CD14-positive monocyte (primary cell): ENCODE measurements at regions of chr12 and their contacts with region 1.

Region 1: DNA sequence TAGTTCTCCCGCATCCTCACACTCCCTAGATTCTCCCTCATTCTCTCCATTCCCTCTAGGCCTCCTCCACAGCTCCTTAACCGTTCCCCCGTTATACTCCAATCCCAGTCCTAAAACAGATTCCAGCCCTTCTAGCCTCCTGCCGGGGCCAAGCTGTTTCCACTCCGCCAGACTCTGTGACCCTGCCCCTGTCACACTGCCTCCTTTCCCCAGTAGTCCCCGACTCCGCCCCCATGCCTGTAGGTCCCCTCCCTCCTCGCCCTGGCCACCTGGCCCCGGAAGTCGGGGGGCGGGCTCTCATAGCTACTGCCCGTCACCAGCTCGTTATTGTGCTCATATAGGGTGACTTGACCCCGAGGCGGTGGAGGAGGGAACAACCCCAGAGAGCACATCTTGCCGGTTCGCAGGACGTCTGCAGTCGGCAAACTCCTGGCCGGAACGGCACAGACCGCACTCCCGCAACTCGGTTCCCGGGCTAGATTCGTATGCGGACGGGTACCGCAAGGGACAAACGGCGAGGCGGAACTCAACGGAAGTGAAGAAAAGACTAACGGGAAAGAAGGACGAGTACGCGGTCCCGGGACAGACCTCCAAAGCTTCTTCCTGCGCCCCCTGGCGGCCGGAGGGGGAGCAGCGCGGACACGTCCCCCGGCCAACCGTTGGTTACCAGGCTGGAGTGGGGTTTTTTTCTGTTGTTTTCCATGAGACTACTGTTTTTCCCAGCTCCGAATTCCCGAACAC is at the start of gene AAAS:
- DNase-seq: peak; percentile 89 to 91 (median 90)
- H3K4me3 ChIP-seq: peak within 1 kb of the TSS; percentile 52 to 96 (median 70)
- H3K4me3 Mint-ChIP-seq: peak within 1 kb of the TSS; percentile 95
- H3K27ac ChIP-seq: peak within 1 kb of the TSS; percentile 70 to 80
- H3K27ac Mint-ChIP-seq: peak within 1 kb of the TSS; percentile 90 to 99 (median 98)
- H3K4me1 ChIP-seq: peaks cover 36 to 43% of the 10 kb centered on the region in 2 donors
- H3K4me1 Mint-ChIP-seq: peaks cover 33% of the 10 kb centered on the region
- H3K27me3 ChIP-seq: peaks cover 5% of the 10 kb centered on the region in 2 donors
- H3K27me3 Mint-ChIP-seq: peaks cover 8 to 9% (median 8%) of the 10 kb centered on the region in 3 donors
- CTCF ChIP-seq: peak; percentile 99
- polyA plus RNA-seq, gene AAAS: 25.6 to 62.6 (median 27.2) TPM

Region 2: GRCh38 chr12:53143355-53143754 is 177.9 kb before region 1 on chr12:
- intact Hi-C with region 1: no loop called
- DNase-seq: no peak
- H3K4me3 ChIP-seq: no peak overlapping the region
- H3K4me3 Mint-ChIP-seq: no peak overlapping the region
- H3K27ac ChIP-seq: no peak overlapping the region
- H3K27ac Mint-ChIP-seq: no peak overlapping the region
- H3K4me1 ChIP-seq: no peaks in the 10 kb centered on the region
- H3K4me1 Mint-ChIP-seq: no peaks in the 10 kb centered on the region
- H3K27me3 ChIP-seq: no peaks in the 10 kb centered on the region
- H3K27me3 Mint-ChIP-seq: peaks cover 0 to 6% (median 3%) of the 10 kb centered on the region in 3 donors
- CTCF ChIP-seq: no peak

Region 3: GRCh38 chr12:53213348-53213747 is 107.9 kb before region 1 on chr12:
- intact Hi-C with region 1: loop called (anchors 2 to 10 kb)
- DNase-seq: peak; percentile 73 to 82 (median 74)
- H3K4me3 ChIP-seq: no peak overlapping the region
- H3K4me3 Mint-ChIP-seq: no peak overlapping the region
- H3K27ac ChIP-seq: no peak overlapping the region
- H3K27ac Mint-ChIP-seq: peak overlapping the region in 1 of 7 donors; percentile 12
- H3K4me1 ChIP-seq: peaks cover 45 to 74% of the 10 kb centered on the region in 2 donors
- H3K4me1 Mint-ChIP-seq: peaks cover 81% of the 10 kb centered on the region
- H3K27me3 ChIP-seq: no peaks in the 10 kb centered on the region
- H3K27me3 Mint-ChIP-seq: peaks cover 0 to 5% (median 2%) of the 10 kb centered on the region in 3 donors
- CTCF ChIP-seq: peak; percentile 97

Region 4: GRCh38 chr12:53295070-53295890 is 26.0 kb before region 1 on chr12 and contains the start of gene PFDN5:
- intact Hi-C with region 1: loop called in 1 of 2 experiments (anchors 2 kb)
- DNase-seq: peak; percentile 79 to 87 (median 80)
- H3K4me3 ChIP-seq: peak within 1 kb of the TSS; percentile 96 to 97 (median 97)
- H3K4me3 Mint-ChIP-seq: peak within 1 kb of the TSS; percentile 96 to 97
- H3K27ac ChIP-seq: peak within 1 kb of the TSS; percentile 78 to 97
- H3K27ac Mint-ChIP-seq: peak within 1 kb of the TSS; percentile 96 to 100 (median 99)
- H3K4me1 ChIP-seq: peaks cover 50 to 53% of the 10 kb centered on the region in 2 donors
- H3K4me1 Mint-ChIP-seq: peaks cover 50% of the 10 kb centered on the region
- H3K27me3 ChIP-seq: no peaks in the 10 kb centered on the region
- H3K27me3 Mint-ChIP-seq: peaks cover 0 to 2% (median 0%) of the 10 kb centered on the region in 3 donors
- CTCF ChIP-seq: no peak
- polyA plus RNA-seq, gene PFDN5: 1,474 to 2,196 (median 1,751) TPM

Region 5: GRCh38 chr12:53344824-53345485 is 23.7 kb after region 1 on chr12:
- intact Hi-C with region 1: loop called in 1 of 2 experiments (anchors 2 kb)
- DNase-seq: peak; percentile 51 to 66 (median 64)
- H3K4me3 ChIP-seq: peak overlapping the region; percentile 59 to 86 (median 62)
- H3K4me3 Mint-ChIP-seq: peak overlapping the region; percentile 98 to 100
- H3K27ac ChIP-seq: no peak overlapping the region
- H3K27ac Mint-ChIP-seq: peak overlapping the region in 4 of 7 donors; percentile 70 to 83 (median 77)
- H3K4me1 ChIP-seq: peaks cover 15 to 18% of the 10 kb centered on the region in 2 donors
- H3K4me1 Mint-ChIP-seq: peaks cover 20% of the 10 kb centered on the region
- H3K27me3 ChIP-seq: peaks cover 0 to 10% of the 10 kb centered on the region in 2 donors
- H3K27me3 Mint-ChIP-seq: peaks cover 11 to 28% (median 23%) of the 10 kb centered on the region in 3 donors
- CTCF ChIP-seq: peak; percentile 80

Region 6: DNA sequence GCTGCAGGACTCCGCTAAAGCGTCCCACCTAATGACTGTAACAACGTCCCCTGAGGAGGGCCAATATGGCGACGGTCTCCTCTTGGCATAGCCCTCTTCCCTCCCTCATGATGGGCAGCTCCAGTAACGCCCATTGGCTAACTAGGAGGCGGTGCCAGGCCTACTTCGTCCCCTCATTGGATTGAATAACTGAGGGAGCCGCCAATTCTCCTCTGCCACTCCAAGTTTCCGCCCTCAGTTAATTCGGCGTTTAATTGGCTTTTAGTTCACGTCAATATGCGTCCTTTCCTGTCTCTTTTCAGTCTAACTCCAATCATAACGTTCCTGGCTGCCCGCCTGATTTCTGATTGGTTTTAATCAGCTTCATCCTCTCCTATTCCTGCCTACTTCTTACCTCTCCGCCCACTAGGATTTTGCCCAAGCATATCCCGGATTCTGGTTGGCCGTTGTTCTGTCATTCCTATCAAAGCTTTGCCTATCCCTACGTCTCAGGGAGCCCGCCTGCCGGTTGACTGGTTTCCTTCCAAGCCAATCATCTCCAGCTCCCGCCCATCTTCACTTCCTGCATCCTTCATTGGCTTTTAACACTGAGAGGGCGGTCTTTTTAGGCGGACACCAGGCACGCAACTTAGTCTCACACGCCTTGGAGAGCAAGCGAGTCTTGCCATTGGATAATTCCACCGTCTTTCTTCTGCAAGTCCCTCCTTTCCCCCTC is 58.3 kb after region 1 on chr12:
- intact Hi-C with region 1: loop called in 1 of 2 experiments (anchors 2 kb)
- DNase-seq: peak; percentile 100
- H3K4me3 ChIP-seq: peak overlapping the region; percentile 61 to 82 (median 82)
- H3K4me3 Mint-ChIP-seq: no peak overlapping the region
- H3K27ac ChIP-seq: peak overlapping the region; percentile 77 to 91
- H3K27ac Mint-ChIP-seq: no peak overlapping the region
- H3K4me1 ChIP-seq: peaks cover 44 to 50% of the 10 kb centered on the region in 2 donors
- H3K4me1 Mint-ChIP-seq: peaks cover 35% of the 10 kb centered on the region
- H3K27me3 ChIP-seq: no peaks in the 10 kb centered on the region
- H3K27me3 Mint-ChIP-seq: peaks cover 0 to 2% (median 1%) of the 10 kb centered on the region in 3 donors
- CTCF ChIP-seq: no peak

Region 7: GRCh38 chr12:53402871-53403270 is 81.6 kb after region 1 on chr12:
- intact Hi-C with region 1: no loop called
- DNase-seq: no peak
- H3K4me3 ChIP-seq: no peak overlapping the region
- H3K4me3 Mint-ChIP-seq: no peak overlapping the region
- H3K27ac ChIP-seq: no peak overlapping the region
- H3K27ac Mint-ChIP-seq: peak overlapping the region in 2 of 7 donors; percentile 46 to 68
- H3K4me1 ChIP-seq: no peaks in the 10 kb centered on the region
- H3K4me1 Mint-ChIP-seq: no peaks in the 10 kb centered on the region
- H3K27me3 ChIP-seq: no peaks in the 10 kb centered on the region
- H3K27me3 Mint-ChIP-seq: peaks cover 0 to 2% (median 1%) of the 10 kb centered on the region in 3 donors
- CTCF ChIP-seq: no peak

Region 8: DNA sequence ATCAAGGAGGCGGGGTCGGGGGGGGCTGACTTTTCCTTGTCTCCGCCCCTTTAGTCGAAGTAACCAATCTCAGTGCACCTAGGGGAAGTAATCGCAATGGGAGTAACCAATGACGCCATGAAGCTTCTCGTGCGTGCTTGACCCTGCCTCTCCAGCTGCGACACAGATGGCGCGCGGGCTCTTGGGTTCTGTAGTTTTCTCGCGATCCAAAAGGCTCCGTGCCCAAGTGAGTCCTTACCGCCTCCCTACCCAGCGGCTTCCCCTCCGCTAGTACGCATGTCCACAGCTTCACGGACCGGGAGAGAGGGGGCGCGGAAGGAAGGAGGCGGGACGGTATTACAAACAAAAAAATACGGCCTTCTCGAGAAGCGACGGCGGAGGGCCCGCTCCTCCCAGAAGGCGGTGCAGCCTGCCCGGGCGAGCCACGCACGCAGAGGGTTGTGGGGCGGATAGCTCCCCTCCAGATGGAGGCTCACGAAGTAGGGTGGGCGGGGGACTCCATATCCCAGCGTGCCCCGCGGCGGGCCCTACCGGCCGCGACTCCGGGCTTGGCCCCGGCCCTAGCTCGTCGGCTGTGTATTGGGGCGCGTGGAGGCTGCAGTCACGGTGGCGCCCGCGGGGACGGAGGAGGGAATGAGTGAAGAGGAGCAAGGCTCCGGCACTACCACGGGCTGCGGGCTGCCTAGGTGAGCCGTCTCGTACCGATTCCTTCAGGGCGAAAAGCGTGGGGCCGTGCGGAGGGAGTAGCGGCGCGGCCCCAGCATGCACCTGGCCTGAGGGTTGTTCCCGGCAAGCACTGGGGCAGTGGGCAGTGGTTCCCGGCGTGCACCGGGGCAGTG is 179.8 kb after region 1 on chr12 and contains the start of gene TARBP2:
- intact Hi-C with region 1: loop called in 1 of 2 experiments (anchors 5 kb)
- DNase-seq: peak; percentile 99
- H3K4me3 ChIP-seq: peak within 1 kb of the TSS; percentile 74 to 83 (median 81)
- H3K4me3 Mint-ChIP-seq: peak within 1 kb of the TSS; percentile 88 to 100
- H3K27ac ChIP-seq: peak within 1 kb of the TSS; percentile 99
- H3K27ac Mint-ChIP-seq: peak within 1 kb of the TSS; percentile 97 to 99 (median 99)
- H3K4me1 ChIP-seq: peaks cover 42 to 46% of the 10 kb centered on the region in 2 donors
- H3K4me1 Mint-ChIP-seq: peaks cover 47% of the 10 kb centered on the region
- H3K27me3 ChIP-seq: no peaks in the 10 kb centered on the region
- H3K27me3 Mint-ChIP-seq: peaks cover 0 to 6% (median 0%) of the 10 kb centered on the region in 3 donors
- CTCF ChIP-seq: no peak
- polyA plus RNA-seq, gene TARBP2: 16.6 to 39.4 (median 24.4) TPM